Endothelial cell of umbilical vein (primary cell): ENCODE measurements at regions of chr10 and their contacts with region 1.

Region 1: DNA sequence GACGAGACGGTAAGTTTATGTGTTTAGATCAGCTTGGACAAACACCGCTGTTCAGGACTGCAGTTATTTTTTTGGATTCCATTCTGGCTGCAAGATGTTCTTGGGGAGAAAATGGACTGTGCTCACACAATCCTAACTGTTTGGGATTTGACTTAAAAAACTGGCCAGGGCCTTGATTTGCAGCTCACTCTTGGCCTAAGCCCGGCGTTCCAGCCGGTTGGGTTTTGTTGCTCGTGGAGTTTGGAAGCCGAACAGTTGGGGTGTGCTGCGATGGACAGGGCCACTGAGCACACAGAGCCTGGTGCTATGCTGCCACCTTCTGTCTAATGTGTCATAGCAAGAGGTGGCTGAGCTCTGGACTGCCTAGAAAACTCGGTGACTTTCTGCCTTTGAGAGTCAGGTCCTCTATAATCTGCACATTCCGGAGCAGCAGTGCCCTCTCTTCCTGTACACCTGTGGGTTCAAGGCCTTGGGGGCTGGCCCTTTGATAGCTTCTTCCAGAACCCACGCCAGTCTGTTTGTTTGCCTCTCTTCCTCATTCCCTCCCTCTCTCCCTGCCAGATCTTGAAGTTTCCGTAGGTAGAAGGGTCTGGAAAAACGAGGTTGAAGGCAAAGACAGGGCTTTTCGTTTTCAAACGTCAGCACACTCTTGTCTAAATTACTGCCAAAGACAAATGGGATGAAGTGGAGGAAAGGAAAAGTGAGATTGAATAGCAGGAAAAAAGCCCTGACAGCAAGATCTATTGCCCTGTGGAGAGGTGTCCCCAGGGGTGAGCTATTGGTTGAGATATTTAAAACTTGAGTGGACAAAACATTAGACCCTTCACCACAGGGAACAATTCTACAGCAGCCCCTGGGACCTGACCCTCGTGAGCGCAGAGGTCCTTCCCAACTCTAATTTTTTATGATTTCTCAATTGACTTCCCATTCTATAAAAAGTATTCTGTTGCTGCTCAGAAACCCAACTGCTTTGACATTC is 167.5 kb upstream of the HABP2 start:
- DNase-seq: peak; percentile 83
- H3K4me3 ChIP-seq: no peak overlapping the region
- H3K27ac ChIP-seq: no peak overlapping the region
- H3K4me1 ChIP-seq: peaks cover 28% of the 10 kb centered on the region
- H3K27me3 ChIP-seq: peaks cover 1 to 5% of the 10 kb centered on the region in 2 experiments
- CTCF ChIP-seq: peak; percentile 78 to 90
- POLR2A ChIP-seq: no peak

Region 2: DNA sequence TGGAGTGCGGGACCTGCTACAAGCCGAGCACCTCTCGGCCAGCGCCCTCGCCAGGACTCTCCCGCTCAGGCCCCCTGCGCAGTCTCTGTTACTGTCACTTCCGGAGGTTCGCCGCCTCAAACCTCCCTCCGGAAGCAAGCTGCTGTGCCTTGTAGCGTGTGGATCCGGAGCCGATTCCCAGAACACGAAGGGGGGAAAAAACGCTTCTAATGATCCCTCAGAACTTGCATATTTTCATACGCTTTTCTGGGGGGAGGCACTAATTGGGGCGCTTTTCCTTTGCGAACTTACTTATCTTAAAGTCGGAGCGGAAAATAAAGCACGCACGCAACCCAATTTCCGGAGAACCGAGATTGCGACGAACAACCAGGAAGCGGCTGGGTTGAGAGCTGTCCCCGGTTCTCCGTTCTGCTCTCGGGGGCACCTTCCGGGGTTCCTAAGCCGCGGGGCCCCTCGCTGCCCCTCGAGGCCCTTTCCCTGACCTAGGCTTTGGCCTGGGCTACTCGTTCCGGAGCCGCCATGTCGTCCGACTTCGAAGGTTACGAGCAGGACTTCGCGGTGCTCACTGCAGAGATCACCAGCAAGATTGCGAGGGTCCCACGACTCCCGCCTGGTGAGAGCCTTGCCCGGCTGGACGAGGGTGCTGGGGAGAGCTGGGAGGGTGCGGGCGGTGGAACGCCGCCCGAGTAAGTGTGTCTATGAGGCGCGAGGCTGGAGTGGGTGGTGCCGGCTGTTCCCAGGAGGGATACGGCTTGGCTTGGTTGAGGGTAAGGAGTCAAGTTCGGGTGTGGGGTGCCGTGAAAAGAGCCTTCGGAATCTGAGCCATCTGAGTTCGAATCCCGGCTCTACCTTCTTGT is 938.2 kb before region 1 on chr10 and contains the starts of genes VTI1A and ZDHHC6:
- CTCF ChIA-PET with region 1: interaction called, 6 read pairs
- POLR2A ChIA-PET with region 1: no interaction called
- dilution Hi-C with region 1: no loop called
- intact Hi-C with region 1: loop called (anchors 10 kb)
- DNase-seq: peak; percentile 79
- H3K4me3 ChIP-seq: peak within 1 kb of the TSS; percentile 89 to 98 (median 96)
- H3K27ac ChIP-seq: peak within 1 kb of the TSS; percentile 94
- H3K4me1 ChIP-seq: peaks cover 18% of the 10 kb centered on the region
- H3K27me3 ChIP-seq: no peaks in the 10 kb centered on the region
- CTCF ChIP-seq: peak in 1 of 2 donors; percentile 36
- POLR2A ChIP-seq: peak; percentile 91
- total RNA-seq, gene VTI1A: 35.6 and 36.8 TPM in 2 replicates
- total RNA-seq, gene ZDHHC6: 41.9 and 42.1 TPM in 2 replicates

Region 3: DNA sequence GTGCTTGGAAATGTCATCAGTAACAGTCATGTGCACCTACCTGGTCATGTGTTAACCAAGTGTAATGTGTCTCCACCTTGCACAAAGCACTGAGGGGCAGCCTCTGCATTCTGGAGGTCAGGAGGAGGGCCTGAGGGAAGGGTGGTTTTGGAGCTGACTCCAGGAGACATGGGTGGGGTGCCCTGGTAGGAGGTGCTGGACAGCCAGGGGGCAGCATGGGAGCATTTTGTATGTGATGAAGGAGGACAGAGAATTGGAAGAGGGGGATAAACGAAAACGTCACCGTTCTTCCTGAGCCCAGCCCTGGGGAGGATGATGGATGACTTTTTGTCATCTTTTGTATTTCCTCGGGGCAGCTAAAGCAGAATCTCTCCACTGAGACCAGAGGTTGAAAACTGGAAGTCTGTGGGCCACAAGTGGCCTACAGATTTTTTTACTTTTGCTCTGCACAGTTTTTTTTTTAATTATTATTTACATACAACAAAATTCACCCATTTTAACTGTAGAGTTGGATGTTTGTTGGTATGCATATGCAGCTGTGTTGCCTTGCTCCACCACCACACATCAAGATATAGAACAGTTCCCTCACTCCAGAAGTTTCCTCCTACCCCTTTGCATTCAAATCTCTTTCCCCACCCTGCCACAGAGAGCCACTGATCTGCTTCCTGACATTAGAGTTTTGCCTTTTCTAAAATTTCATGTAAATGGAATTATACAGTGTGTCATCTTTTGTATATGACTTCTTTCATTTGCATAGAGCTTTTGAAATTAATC is 695.8 kb before region 1 on chr10:
- CTCF ChIA-PET with region 1: interaction called, 9 read pairs
- POLR2A ChIA-PET with region 1: no interaction called
- dilution Hi-C with region 1: no loop called
- intact Hi-C with region 1: loop called (anchors 1 kb)
- DNase-seq: peak; percentile 11
- H3K4me3 ChIP-seq: no peak overlapping the region
- H3K27ac ChIP-seq: no peak overlapping the region
- H3K4me1 ChIP-seq: no peaks in the 10 kb centered on the region
- H3K27me3 ChIP-seq: no peaks in the 10 kb centered on the region
- CTCF ChIP-seq: peak in 1 of 2 donors; percentile 23
- POLR2A ChIP-seq: no peak

Region 4: DNA sequence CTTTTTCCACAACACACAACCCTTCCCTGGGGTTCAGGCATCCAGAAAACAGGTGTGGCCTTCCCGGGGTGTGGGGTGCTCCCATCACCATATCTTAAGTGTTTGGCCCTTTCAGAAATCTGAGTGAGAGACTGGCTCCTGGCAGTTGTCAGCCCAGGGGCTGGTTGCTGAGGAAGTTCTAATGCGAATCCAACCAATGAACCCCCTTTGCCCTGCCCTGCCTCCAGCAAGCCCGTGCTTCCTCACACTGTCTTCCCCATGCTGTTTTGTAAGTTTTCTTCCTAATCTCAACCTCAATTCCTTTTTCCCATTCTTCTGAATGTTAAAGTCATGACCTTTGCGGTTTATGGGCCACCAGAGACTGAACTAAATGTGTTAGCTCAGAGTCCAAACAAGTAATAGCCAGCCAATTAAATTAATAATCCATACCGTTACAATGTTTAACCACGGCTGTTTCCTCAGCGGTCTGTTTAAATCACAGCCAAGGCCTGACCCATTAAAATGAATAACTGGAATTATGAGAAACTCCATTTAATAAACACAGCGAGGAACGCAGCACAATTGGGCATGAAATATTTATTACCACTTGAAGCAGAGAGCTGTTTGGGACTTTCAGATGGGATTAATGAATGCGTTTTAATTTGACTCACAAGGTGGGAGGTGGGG is 526.2 kb before region 1 on chr10:
- CTCF ChIA-PET with region 1: no interaction called
- POLR2A ChIA-PET with region 1: no interaction called
- dilution Hi-C with region 1: no loop called
- intact Hi-C with region 1: loop called (anchors 10 kb)
- DNase-seq: peak; percentile 63
- H3K4me3 ChIP-seq: no peak overlapping the region
- H3K27ac ChIP-seq: no peak overlapping the region
- H3K4me1 ChIP-seq: no peaks in the 10 kb centered on the region
- H3K27me3 ChIP-seq: peaks cover 0 to 8% of the 10 kb centered on the region in 2 experiments
- CTCF ChIP-seq: no peak
- POLR2A ChIP-seq: no peak

Region 5: GRCh38 chr10:113087165-113088029 is 297.9 kb before region 1 on chr10:
- CTCF ChIA-PET with region 1: no interaction called
- POLR2A ChIA-PET with region 1: no interaction called
- dilution Hi-C with region 1: no loop called
- intact Hi-C with region 1: loop called (anchors 1 kb)
- DNase-seq: peak; percentile 99
- H3K4me3 ChIP-seq: no peak overlapping the region
- H3K27ac ChIP-seq: peak overlapping the region; percentile 90
- H3K4me1 ChIP-seq: peaks cover 28% of the 10 kb centered on the region
- H3K27me3 ChIP-seq: no peaks in the 10 kb centered on the region
- CTCF ChIP-seq: no peak
- POLR2A ChIP-seq: no peak

Region 6: GRCh38 chr10:113216102-113216501 is 169.2 kb before region 1 on chr10:
- CTCF ChIA-PET with region 1: interaction called, 11 read pairs
- POLR2A ChIA-PET with region 1: no interaction called
- dilution Hi-C with region 1: no loop called
- intact Hi-C with region 1: loop called (anchors 1 kb)
- DNase-seq: no peak
- H3K4me3 ChIP-seq: no peak overlapping the region
- H3K27ac ChIP-seq: no peak overlapping the region
- H3K4me1 ChIP-seq: no peaks in the 10 kb centered on the region
- H3K27me3 ChIP-seq: peaks cover 0 to under 1% of the 10 kb centered on the region in 2 experiments
- CTCF ChIP-seq: no peak
- POLR2A ChIP-seq: no peak

Region 7: GRCh38 chr10:113563306-113564088 is 178.2 kb after region 1 on chr10:
- CTCF ChIA-PET with region 1: interaction called, 29 read pairs
- POLR2A ChIA-PET with region 1: no interaction called
- dilution Hi-C with region 1: no loop called
- intact Hi-C with region 1: loop called (anchors 1 kb)
- DNase-seq: peak; percentile 68
- H3K4me3 ChIP-seq: peak overlapping the region in 2 of 3 experiments; percentile 41
- H3K27ac ChIP-seq: no peak overlapping the region
- H3K4me1 ChIP-seq: peaks cover 8% of the 10 kb centered on the region
- H3K27me3 ChIP-seq: no peaks in the 10 kb centered on the region
- CTCF ChIP-seq: peak; percentile 97 to 99
- POLR2A ChIP-seq: no peak